B cell (primary cell): ENCODE measurements at regions of chr11 and their contacts with region 1.

Region 1: DNA sequence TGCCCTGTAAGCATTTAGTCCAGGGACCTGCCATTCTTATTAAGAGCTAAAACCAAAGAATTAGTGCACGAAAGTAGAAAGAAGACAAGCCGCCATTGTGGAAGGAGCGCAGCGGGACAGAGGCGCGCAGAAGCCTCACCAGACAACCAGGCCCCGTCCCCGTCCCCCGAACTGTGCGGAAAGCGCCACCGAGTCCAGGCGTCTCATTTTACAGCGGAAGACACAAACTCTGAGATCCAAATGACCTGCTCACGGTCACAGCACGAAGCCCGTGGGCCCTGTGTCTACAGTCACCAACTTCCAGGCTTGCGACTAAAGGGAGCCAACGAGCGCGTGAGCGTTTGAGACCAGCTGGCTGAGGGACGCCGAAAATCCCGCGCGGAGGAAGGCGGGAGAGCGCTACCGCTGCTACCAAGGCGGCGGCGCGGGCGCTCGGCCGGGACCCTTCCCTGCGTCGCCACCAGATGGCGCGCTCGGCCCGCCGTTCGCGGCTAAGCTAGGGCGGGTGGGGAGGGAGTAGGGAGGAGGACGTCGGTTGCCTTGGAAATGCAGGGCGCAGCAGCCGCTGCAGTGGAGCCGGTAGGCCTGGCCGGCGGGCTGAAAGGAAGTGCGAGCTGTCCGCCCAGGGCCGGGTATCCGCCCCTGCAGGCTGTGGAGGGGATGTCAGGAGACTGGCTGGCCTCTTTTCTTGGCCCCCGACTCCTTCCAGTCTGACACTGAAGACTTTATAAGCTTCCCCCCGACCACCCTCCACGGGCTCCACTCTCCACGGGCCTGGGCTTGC is 434 bp upstream of the CCDC83 start:
- DNase-seq: peak; percentile 92
- ATAC-seq: peak; percentile 96
- H3K4me3 ChIP-seq: peak overlapping the region; percentile 51 to 74 (median 69)
- H3K4me3 Mint-ChIP-seq: peak overlapping the region; percentile 89
- H3K27ac ChIP-seq: peak overlapping the region; percentile 20 to 77
- H3K27ac Mint-ChIP-seq: peak overlapping the region; percentile 84
- H3K4me1 ChIP-seq: peaks cover 3 to 11% of the 10 kb centered on the region in 2 donors
- H3K4me1 Mint-ChIP-seq: peaks cover 12% of the 10 kb centered on the region
- H3K27me3 ChIP-seq: no peaks in the 10 kb centered on the region
- H3K27me3 Mint-ChIP-seq: peaks cover 11% of the 10 kb centered on the region
- CTCF ChIP-seq: peak; percentile 92

Region 2: GRCh38 chr11:85664615-85665481 is 189.9 kb before region 1 on chr11 and contains the start of gene CREBZF:
- CTCF ChIA-PET with region 1: no interaction called
- POLR2A ChIA-PET with region 1: no interaction called
- intact Hi-C with region 1: loop called (anchors 2 kb)
- DNase-seq: peak; percentile 95
- ATAC-seq: peak; percentile 84
- H3K4me3 ChIP-seq: peak within 1 kb of the TSS; percentile 78 to 95 (median 89)
- H3K4me3 Mint-ChIP-seq: peak within 1 kb of the TSS; percentile 94
- H3K27ac ChIP-seq: peak within 1 kb of the TSS; percentile 96 to 97
- H3K27ac Mint-ChIP-seq: peak within 1 kb of the TSS; percentile 95
- H3K4me1 ChIP-seq: peaks cover 16 to 21% of the 10 kb centered on the region in 2 donors
- H3K4me1 Mint-ChIP-seq: peaks cover 45% of the 10 kb centered on the region
- H3K27me3 ChIP-seq: no peaks in the 10 kb centered on the region
- H3K27me3 Mint-ChIP-seq: no peaks in the 10 kb centered on the region
- CTCF ChIP-seq: no peak
- total RNA-seq, gene CREBZF: 109 and 110 TPM in 2 replicates

Region 3: DNA sequence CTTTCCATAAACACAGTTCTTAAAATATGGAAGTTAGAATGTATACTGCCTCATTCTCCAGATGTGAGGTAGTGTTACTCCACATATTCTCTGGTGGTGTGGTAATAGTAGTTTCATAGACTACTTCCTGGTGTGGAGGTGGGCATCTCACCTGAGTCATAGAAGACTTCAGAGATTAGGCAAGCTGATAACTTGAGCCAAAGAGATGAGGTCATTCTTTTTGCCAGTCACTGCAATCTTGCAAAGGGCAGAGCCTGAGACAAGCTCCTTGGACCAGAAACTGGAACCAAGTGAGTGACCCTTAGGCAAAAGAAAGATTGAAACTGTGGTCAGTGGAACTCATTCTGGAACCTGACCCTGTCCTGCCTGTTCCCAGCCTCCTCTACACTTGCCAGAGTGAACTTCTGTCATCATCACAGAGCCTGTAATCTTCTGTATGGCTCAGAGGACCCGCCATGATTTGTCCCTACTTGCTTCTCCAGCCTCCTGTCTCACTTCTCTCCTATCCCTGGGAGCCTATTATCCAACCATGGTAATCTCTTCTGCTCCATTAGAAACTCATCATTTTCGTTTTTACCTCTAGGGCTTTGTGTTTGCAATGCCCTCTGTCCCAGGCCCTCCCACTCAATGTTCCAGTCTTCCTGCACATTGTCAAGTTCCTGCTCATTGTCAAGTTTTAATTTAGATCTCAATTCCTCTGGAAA is 10.2 kb before region 1 on chr11:
- CTCF ChIA-PET with region 1: interaction called, 12 read pairs
- POLR2A ChIA-PET with region 1: no interaction called
- intact Hi-C with region 1: no loop called
- DNase-seq: no peak
- ATAC-seq: no peak
- H3K4me3 ChIP-seq: no peak overlapping the region
- H3K4me3 Mint-ChIP-seq: no peak overlapping the region
- H3K27ac ChIP-seq: no peak overlapping the region
- H3K27ac Mint-ChIP-seq: no peak overlapping the region
- H3K4me1 ChIP-seq: no peaks in the 10 kb centered on the region
- H3K4me1 Mint-ChIP-seq: no peaks in the 10 kb centered on the region
- H3K27me3 ChIP-seq: no peaks in the 10 kb centered on the region
- H3K27me3 Mint-ChIP-seq: no peaks in the 10 kb centered on the region
- CTCF ChIP-seq: no peak

Region 4: GRCh38 chr11:85939099-85940015 is 84.6 kb after region 1 on chr11:
- CTCF ChIA-PET with region 1: no interaction called
- POLR2A ChIA-PET with region 1: no interaction called
- intact Hi-C with region 1: no loop called
- DNase-seq: no peak
- ATAC-seq: no peak
- H3K4me3 ChIP-seq: no peak overlapping the region
- H3K4me3 Mint-ChIP-seq: no peak overlapping the region
- H3K27ac ChIP-seq: no peak overlapping the region
- H3K27ac Mint-ChIP-seq: no peak overlapping the region
- H3K4me1 ChIP-seq: no peaks in the 10 kb centered on the region
- H3K4me1 Mint-ChIP-seq: no peaks in the 10 kb centered on the region
- H3K27me3 ChIP-seq: no peaks in the 10 kb centered on the region
- H3K27me3 Mint-ChIP-seq: no peaks in the 10 kb centered on the region
- CTCF ChIP-seq: no peak

Region 5: GRCh38 chr11:86291466-86292262 is 436.9 kb after region 1 on chr11:
- CTCF ChIA-PET with region 1: interaction called, 23 read pairs
- POLR2A ChIA-PET with region 1: interaction called, 4 read pairs
- intact Hi-C with region 1: loop called (anchors 1 kb)
- DNase-seq: peak; percentile 71
- ATAC-seq: peak; percentile 62
- H3K4me3 ChIP-seq: no peak overlapping the region
- H3K4me3 Mint-ChIP-seq: no peak overlapping the region
- H3K27ac ChIP-seq: no peak overlapping the region
- H3K27ac Mint-ChIP-seq: no peak overlapping the region
- H3K4me1 ChIP-seq: peaks cover 16 to 26% of the 10 kb centered on the region in 2 donors
- H3K4me1 Mint-ChIP-seq: peaks cover 26% of the 10 kb centered on the region
- H3K27me3 ChIP-seq: no peaks in the 10 kb centered on the region
- H3K27me3 Mint-ChIP-seq: no peaks in the 10 kb centered on the region
- CTCF ChIP-seq: peak; percentile 86

Region 6: DNA sequence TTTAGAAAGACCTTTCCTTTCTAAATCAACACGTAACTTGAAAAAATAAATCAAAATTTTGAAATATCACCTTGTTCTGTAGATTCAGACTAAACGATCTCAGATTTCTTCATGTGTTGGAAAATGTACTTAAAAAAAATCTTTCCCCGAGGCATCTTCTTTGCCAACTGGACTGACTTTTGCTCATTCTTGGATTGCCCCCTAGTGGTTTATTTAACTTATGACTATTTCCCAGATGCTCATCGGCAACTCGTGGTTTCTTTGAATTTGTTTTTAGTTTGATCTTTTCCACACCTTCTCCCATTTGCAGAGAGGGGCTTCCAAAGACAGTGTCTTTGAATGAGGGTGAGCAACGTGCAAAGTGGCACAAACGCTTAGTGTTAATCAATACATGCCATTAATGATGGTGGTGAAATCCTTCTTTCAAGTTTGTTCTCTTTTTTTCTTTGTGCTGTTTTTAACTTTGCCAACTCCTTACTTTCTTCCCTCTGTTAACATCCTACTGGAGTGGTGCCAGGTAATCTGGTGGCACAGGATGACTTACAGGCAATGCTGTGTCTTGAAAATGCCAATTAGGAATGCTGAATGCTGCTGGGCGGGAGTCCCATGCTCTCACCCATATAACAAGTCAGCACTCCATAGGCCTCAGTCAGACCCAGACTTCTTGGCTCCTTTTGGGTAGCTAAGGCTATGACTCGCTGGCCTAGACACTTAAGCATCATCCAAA is 963.9 kb after region 1 on chr11:
- CTCF ChIA-PET with region 1: interaction called, 5 read pairs
- POLR2A ChIA-PET with region 1: no interaction called
- intact Hi-C with region 1: loop called (anchors 1 kb)
- DNase-seq: peak; percentile 52
- ATAC-seq: no peak
- H3K4me3 ChIP-seq: no peak overlapping the region
- H3K4me3 Mint-ChIP-seq: no peak overlapping the region
- H3K27ac ChIP-seq: no peak overlapping the region
- H3K27ac Mint-ChIP-seq: no peak overlapping the region
- H3K4me1 ChIP-seq: no peaks in the 10 kb centered on the region
- H3K4me1 Mint-ChIP-seq: no peaks in the 10 kb centered on the region
- H3K27me3 ChIP-seq: peaks cover 0 to 4% (median 2%) of the 10 kb centered on the region in 4 experiments
- H3K27me3 Mint-ChIP-seq: peaks cover 13% of the 10 kb centered on the region
- CTCF ChIP-seq: peak; percentile 88